AG04450 (cell line): ENCODE measurements at regions of chr1 and their contacts with region 1.

Region 1: GRCh38 chr1:92749024-92749634 is 35.8 kb downstream of the EVI5 start:
- DNase-seq: no peak
- H3K4me3 ChIP-seq: no peak overlapping the region
- H3K27ac ChIP-seq: no peak overlapping the region
- H3K27me3 ChIP-seq: no peaks in the 10 kb centered on the region
- CTCF ChIP-seq: peak; percentile 78

Region 2: GRCh38 chr1:92310185-92310597 is 438.9 kb before region 1 on chr1:
- CTCF ChIA-PET with region 1: interaction called, 11 read pairs
- POLR2A ChIA-PET with region 1: no interaction called
- DNase-seq: no peak
- H3K4me3 ChIP-seq: no peak overlapping the region
- H3K27ac ChIP-seq: no peak overlapping the region
- H3K27me3 ChIP-seq: no peaks in the 10 kb centered on the region
- CTCF ChIP-seq: peak; percentile 64

Region 3: GRCh38 chr1:92762355-92762754 is 13.2 kb after region 1 on chr1:
- CTCF ChIA-PET with region 1: interaction called, 12 read pairs
- POLR2A ChIA-PET with region 1: no interaction called
- DNase-seq: no peak
- H3K4me3 ChIP-seq: no peak overlapping the region
- H3K27ac ChIP-seq: no peak overlapping the region
- H3K27me3 ChIP-seq: no peaks in the 10 kb centered on the region
- CTCF ChIP-seq: no peak

Region 4: DNA sequence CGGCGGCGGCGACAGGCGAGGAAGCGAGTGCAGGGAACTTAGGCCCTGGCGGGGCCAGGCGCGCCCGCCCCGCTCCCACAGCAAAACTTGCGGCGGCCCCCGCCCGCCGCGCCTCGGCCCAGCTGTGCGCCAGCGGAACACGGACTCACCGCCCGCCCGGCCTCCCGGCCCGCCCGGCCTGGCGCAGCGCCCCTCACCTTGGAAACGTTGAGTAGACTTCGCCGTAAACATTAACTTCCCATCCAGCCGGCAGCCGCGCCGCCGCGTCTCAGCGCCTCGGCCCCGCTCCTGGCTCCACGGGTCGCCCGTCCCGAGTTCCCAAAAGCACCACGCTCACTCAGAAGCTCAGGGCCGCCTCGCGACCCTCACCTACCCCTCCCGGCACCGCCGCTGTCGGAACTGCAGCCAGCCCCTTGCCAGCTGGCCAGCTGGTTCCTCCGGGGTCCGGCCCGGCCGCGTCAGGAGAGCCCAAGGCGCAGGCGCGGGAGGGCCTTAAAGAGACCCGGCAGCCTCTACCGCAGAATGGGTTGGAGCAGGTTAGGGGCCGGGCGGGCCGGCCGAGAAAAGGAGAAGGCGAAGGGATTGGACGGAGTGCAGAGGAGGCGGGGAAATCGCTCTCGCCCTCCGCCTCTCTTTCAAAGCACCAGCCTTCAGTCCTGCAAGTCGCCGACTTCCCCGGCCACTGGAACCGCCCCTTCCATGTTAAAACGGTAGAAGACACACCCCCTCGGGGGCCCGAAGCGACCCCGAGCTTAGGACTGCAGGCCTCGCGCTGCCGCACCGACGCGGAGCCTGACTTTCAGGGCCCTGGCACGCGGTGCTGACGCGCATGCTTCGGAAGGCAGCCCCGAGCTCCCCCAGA is 35.7 kb after region 1 on chr1 and contains the start of gene EVI5:
- CTCF ChIA-PET with region 1: interaction called, 12 read pairs
- POLR2A ChIA-PET with region 1: interaction called, 6 read pairs
- DNase-seq: peak; percentile 94
- H3K4me3 ChIP-seq: peak within 1 kb of the TSS; percentile 82
- H3K27ac ChIP-seq: peak within 1 kb of the TSS; percentile 90
- H3K27me3 ChIP-seq: no peaks in the 10 kb centered on the region
- CTCF ChIP-seq: no peak; the same call in 1 of the 2 replicates
- polyA plus RNA-seq, gene EVI5: 19.9 and 28.5 TPM in 2 replicates

Region 5: DNA sequence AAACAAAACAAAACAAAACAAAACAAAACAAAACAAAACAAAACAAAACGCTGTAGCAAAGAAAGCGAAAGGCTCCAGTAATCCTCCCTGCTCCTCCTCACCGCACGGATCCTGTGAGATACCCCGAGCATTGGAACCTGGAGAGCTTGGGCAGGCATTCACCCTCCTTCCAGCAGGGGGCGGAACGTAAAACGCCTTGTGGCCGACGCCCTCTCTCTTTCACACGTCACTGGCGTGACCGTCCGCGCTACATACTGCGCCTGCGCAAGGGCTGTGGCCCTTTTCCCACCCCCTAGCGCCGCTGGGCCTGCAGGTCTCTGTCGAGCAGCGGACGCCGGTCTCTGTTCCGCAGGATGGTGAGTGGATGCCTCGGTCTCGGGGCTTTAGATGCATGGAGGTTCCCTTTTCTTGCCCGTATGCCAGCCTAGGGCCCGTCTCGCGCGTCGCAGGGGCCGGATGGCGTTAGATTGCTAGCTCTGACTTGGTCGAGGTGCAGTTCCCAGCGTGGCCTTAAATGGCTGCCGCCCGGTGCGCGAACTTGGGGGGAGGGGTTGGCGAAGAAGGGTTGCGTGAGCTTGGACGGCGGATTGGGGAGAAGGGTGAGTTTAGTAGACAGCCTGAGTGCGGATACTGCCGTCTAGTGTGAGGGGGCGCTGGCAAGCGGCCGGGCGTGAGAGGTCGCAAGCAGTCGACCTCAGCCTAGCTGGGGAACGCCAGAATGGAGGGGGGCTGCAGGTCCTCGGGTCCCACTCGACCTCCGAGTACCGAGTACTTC is 82.8 kb after region 1 on chr1 and contains the start of gene RPL5:
- CTCF ChIA-PET with region 1: interaction called, 14 read pairs
- POLR2A ChIA-PET with region 1: interaction called, 9 read pairs
- DNase-seq: peak; percentile 96
- H3K4me3 ChIP-seq: peak within 1 kb of the TSS; percentile 97
- H3K27ac ChIP-seq: peak within 1 kb of the TSS; percentile 74
- H3K27me3 ChIP-seq: no peaks in the 10 kb centered on the region
- CTCF ChIP-seq: peak; percentile 94
- polyA plus RNA-seq, gene RPL5: 2,179 and 2,752 TPM in 2 replicates